Activated CD4-positive, alpha-beta memory T cell treated with anti-CD3 and anti-CD28 coated beads for 36 hours (primary cell): ENCODE measurements at regions of chr5 and their contacts with region 1.

Region 1: DNA sequence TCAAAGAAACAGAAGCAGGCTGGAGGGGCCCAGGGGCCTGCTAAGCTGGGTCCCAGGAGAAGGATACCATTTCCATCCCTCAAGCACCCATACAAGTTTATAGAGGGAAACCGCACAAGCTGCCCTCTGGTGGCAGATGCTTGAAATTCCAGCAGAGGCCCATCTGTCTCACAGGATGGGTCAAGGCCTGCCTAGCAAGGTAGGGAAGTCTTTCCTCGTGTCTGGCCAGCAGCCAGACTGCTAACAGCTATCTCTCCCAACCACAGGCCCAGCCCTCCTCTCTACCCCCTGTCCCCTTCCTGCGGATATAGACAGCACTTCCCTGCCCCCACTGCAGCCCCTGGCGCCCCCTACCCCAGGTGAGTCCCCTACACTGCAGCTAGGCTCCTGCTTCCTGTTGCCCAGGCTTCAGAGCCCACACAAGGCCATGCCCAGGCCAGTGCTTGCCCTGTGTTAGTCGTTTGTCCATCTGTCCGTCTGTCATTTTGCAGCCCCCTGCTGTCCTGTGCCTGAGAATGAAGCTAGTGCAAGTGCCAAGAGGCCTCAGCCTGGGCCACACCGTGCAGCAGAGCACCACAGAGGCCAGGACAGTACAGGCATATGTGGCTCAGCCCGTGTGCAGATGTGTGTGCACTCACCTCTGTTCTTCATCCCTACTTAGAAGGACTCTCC is 26.2 kb downstream of the TCF7 start:
- DNase-seq: peak; percentile 81
- H3K4me3 Mint-ChIP-seq: no peak overlapping the region
- H3K27ac Mint-ChIP-seq: no peak overlapping the region
- H3K4me1 Mint-ChIP-seq: peaks cover 57% of the 10 kb centered on the region
- H3K27me3 Mint-ChIP-seq: no peaks in the 10 kb centered on the region

Region 2: DNA sequence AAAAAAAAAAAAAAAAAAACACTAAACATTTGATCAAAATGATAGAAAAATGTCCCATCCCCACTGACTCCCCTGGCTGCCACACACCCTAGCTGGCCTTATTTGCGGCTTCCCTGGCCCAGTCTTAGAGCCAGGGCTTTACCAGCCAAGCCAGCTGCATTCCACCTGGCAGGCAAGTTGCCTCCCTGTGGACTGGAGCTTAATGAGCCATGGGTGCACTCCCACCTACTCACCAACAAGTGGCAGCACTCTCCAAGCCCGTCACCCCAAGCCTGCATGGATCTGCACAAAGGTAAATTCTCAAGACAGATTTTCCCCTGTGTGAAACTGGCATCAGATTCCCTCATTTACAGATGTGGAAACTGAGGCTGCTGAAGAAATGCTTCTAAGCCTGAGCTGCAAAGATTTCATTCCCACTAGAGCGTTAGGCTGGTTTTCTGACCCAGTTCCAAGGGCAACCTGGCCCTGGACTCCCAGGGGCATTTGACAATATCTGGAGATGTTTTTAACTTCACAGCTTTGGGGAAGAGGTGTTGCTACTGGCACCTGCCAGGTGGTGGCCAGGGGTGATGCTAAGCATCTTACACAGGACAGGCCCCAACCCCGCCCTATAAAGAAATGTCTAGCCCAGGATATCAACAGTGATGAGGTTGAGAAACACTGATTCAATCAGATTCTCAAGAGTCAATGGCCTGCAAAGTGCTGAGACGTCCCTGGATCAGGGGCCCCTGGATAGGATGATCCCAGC is 114.0 kb before region 1 on chr5:
- CTCF ChIA-PET with region 1: interaction called, 981 read pairs
- POLR2A ChIA-PET with region 1: no interaction called
- intact Hi-C with region 1: no loop called
- DNase-seq: peak; percentile 64
- H3K4me3 Mint-ChIP-seq: no peak overlapping the region
- H3K27ac Mint-ChIP-seq: no peak overlapping the region
- H3K4me1 Mint-ChIP-seq: no peaks in the 10 kb centered on the region
- H3K27me3 Mint-ChIP-seq: no peaks in the 10 kb centered on the region

Region 3: GRCh38 chr5:134086943-134087305 is 53.7 kb before region 1 on chr5:
- CTCF ChIA-PET with region 1: interaction called, 23 read pairs
- POLR2A ChIA-PET with region 1: no interaction called
- intact Hi-C with region 1: loop called (anchors 1 kb)
- DNase-seq: peak; percentile 88
- H3K4me3 Mint-ChIP-seq: peak overlapping the region; percentile 10
- H3K27ac Mint-ChIP-seq: peak overlapping the region; percentile 80
- H3K4me1 Mint-ChIP-seq: peaks cover 75% of the 10 kb centered on the region
- H3K27me3 Mint-ChIP-seq: peaks cover 2% of the 10 kb centered on the region

Region 4: DNA sequence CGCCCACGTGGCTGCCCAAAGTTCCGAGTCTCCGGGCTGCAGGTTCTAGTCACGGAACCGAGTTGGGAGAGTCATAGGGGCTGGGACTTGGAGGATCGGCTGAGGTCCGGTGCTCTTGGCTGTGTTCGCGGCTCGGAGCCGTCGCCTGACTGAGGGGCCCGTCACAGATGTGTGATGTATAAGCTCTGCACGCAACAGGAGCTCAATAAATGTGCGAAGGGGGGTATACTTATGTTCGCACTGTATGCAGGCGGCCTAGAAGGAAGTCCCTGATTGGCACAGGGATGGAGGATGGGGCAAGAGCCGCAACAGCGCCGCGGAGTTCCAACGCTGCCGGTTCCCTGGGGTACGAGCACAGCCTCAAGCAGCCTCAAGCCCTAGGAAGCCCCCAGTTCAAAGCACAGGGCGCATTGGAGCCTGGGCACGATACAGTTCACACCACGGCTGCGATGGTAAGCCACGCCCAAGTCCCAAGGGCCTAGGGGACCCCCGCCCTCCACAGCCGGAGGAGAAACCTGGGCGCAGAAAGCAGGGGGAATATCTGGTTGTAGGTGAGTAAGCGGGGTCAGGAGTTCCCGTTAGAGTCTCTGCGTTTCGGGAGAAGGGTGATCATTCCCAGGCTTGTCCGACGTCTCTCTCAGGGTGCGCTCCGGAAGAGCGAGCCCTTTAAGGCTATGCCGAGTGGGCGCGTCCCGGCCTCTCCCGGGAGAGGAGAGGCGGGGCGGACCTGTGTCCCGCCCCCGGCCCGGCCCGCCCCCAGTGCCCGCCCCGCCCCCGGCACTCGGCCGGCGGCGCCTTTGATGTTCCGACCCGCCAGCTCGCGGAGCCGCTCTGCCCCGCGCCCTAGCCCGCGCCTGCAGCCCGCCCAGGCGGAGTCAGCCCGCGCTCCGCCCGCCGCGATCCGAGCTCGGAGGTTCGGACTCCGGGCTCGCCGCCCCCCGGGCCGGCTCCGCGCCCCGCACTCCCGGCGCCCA is 26.5 kb before region 1 on chr5 and contains the start of gene TCF7:
- CTCF ChIA-PET with region 1: interaction called, 253 read pairs
- POLR2A ChIA-PET with region 1: interaction called, 43 read pairs
- intact Hi-C with region 1: loop called (anchors 1 kb)
- DNase-seq: peak; percentile 86
- H3K4me3 Mint-ChIP-seq: peak within 1 kb of the TSS; percentile 84
- H3K27ac Mint-ChIP-seq: peak within 1 kb of the TSS; percentile 86
- H3K4me1 Mint-ChIP-seq: peaks cover 66% of the 10 kb centered on the region
- H3K27me3 Mint-ChIP-seq: no peaks in the 10 kb centered on the region
- total RNA-seq, gene TCF7: 59.3 to 65.6 TPM

Region 5: GRCh38 chr5:134161513-134162395 is 21.1 kb after region 1 on chr5:
- CTCF ChIA-PET with region 1: interaction called, 27 read pairs
- POLR2A ChIA-PET with region 1: no interaction called
- intact Hi-C with region 1: no loop called
- DNase-seq: no peak
- H3K4me3 Mint-ChIP-seq: no peak overlapping the region
- H3K27ac Mint-ChIP-seq: peak overlapping the region; percentile 72
- H3K4me1 Mint-ChIP-seq: peaks cover 35% of the 10 kb centered on the region
- H3K27me3 Mint-ChIP-seq: no peaks in the 10 kb centered on the region

Region 6: GRCh38 chr5:134464988-134465815 is 324.5 kb after region 1 on chr5:
- CTCF ChIA-PET with region 1: no interaction called
- POLR2A ChIA-PET with region 1: no interaction called
- intact Hi-C with region 1: no loop called
- DNase-seq: no peak
- H3K4me3 Mint-ChIP-seq: peak overlapping the region; percentile 75
- H3K27ac Mint-ChIP-seq: no peak overlapping the region
- H3K4me1 Mint-ChIP-seq: peaks cover 18% of the 10 kb centered on the region
- H3K27me3 Mint-ChIP-seq: no peaks in the 10 kb centered on the region

Region 7: GRCh38 chr5:134511788-134512650 is 371.4 kb after region 1 on chr5:
- CTCF ChIA-PET with region 1: no interaction called
- POLR2A ChIA-PET with region 1: no interaction called
- intact Hi-C with region 1: no loop called
- DNase-seq: no peak
- H3K4me3 Mint-ChIP-seq: no peak overlapping the region
- H3K27ac Mint-ChIP-seq: peak overlapping the region; percentile 52
- H3K4me1 Mint-ChIP-seq: peaks cover 36% of the 10 kb centered on the region
- H3K27me3 Mint-ChIP-seq: no peaks in the 10 kb centered on the region